ENCODE measurements at regions of chr4 and their contacts with region 1.

Region 1: DNA sequence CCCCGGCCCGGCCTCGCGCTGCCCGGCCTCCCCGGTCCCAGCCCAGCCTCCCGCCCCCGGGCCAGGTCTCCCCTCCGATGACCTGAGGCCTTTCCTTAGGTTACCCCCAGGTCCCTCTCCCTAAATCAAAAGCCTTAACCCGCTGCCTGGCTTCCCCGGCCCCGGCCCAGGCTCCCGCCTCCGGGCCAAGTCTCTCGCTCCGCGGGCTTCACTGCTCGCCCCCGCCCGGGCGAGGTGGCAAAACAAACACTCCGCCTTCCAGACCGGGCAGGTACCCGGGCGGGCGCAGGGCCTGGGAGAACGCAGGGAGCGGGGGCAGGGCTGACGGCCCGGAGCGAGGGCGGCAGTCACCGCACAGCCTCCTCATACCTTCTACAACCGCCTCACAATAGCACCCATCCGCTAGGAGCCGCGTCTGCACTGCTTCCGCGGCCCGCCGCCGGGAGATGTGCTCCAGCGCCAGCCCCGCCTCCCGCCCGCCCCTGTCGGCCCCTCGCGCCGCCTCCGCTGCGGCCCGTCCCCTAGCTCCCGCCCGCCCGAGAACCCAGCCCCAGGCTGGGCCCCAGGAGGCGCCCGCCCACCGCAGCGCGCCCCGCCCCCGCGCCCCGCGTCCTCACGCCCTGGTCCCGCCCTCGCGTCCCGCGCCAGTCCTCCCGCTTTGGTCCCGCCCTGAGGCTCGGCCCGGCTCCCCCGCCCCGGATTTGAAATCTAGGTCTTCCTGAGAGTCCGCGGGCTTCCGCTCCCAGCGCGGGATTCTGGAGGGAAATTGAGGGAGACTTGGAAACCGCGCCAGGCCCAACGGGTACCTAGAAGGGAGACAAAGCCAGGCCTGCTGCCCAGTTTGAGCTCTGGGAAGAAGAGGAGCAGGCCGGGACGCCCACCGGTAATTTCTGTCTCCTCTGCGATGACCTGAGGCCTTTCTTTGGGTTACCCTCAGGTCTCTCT is at the starts of genes CASP3 and PRIMPOL:
- DNase-seq: peak; percentile 96
- H3K4me3 ChIP-seq: peak within 1 kb of the TSS; percentile 65 to 73
- H3K27ac ChIP-seq: peak within 1 kb of the TSS; percentile 91 to 94
- H3K4me1 ChIP-seq: peaks cover 14% of the 10 kb centered on the region
- H3K27me3 ChIP-seq: no peaks in the 10 kb centered on the region
- CTCF ChIP-seq: peak; percentile 10 to 47 (median 20)
- POLR2A ChIP-seq: peak; percentile 80
- total RNA-seq, gene CASP3: 13.3 to 13.8 TPM
- total RNA-seq, gene PRIMPOL: 14.3 to 28.6 TPM

Region 2: GRCh38 chr4:184282251-184282713 is 367.0 kb before region 1 on chr4:
- intact Hi-C with region 1: loop called (anchors 10 kb)
- DNase-seq: peak; percentile 60
- H3K4me3 ChIP-seq: no peak overlapping the region
- H3K27ac ChIP-seq: peak overlapping the region; percentile 34 to 35
- H3K4me1 ChIP-seq: peaks cover 3% of the 10 kb centered on the region
- H3K27me3 ChIP-seq: no peaks in the 10 kb centered on the region
- CTCF ChIP-seq: peak in 1 of 4 experiments; percentile 26
- POLR2A ChIP-seq: no peak

Region 3: DNA sequence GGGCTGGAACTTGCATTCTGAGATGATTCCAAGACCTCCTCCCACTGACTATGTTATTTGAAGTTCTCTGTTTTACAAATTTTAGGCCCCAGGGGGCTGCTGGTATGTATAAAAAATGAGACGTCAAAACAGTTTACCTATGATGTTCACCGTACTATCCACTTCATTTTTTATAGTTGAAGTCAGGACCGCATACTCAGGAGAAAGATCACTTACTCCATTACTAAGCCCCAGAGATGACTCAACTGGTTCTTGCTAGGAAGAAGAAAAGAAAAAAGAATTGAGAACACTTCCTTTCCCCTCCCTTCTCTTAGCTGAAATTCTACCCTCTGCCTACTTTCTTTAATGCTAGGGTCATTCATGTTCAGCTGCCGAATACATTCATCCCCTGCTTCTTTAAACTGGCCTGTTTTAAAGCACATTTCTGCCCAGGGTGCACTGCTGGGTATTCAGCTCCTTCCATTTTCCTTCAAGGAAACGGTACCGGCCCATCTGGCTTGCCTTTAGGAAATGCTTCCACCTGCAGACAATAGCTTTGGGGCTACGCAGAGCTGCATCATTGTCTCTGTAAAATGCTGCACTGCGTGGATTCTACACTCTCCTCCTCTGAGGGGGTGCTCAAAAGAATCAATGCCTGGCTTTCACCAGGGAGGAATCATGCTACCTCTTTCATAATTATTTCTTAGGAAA is 241.1 kb before region 1 on chr4:
- intact Hi-C with region 1: no loop called
- DNase-seq: no peak
- H3K4me3 ChIP-seq: no peak overlapping the region
- H3K27ac ChIP-seq: peak overlapping the region; percentile 88 to 91
- H3K4me1 ChIP-seq: peaks cover 17% of the 10 kb centered on the region
- H3K27me3 ChIP-seq: no peaks in the 10 kb centered on the region
- CTCF ChIP-seq: no peak
- POLR2A ChIP-seq: no peak

Region 4: GRCh38 chr4:184733654-184734524 is 84.6 kb after region 1 on chr4 and contains the start of gene CENPU:
- intact Hi-C with region 1: loop called (anchors 5 kb)
- DNase-seq: peak; percentile 96
- H3K4me3 ChIP-seq: peak within 1 kb of the TSS; percentile 63 to 65
- H3K27ac ChIP-seq: peak within 1 kb of the TSS; percentile 61 to 77
- H3K4me1 ChIP-seq: no peaks in the 10 kb centered on the region
- H3K27me3 ChIP-seq: no peaks in the 10 kb centered on the region
- CTCF ChIP-seq: peak in 1 of 4 experiments; percentile 36
- POLR2A ChIP-seq: peak; percentile 67
- total RNA-seq, gene CENPU: 2.6 to 15.5 TPM